Left cardiac atrium (tissue), 4 donors: ENCODE measurements at regions of chr3 and their contacts with region 1.

Region 1: GRCh38 chr3:159260049-159260662 is 458.3 kb downstream of the MFSD1 start:
- DNase-seq: peak; percentile 31
- ATAC-seq: peak; percentile 18 to 65

Region 2: DNA sequence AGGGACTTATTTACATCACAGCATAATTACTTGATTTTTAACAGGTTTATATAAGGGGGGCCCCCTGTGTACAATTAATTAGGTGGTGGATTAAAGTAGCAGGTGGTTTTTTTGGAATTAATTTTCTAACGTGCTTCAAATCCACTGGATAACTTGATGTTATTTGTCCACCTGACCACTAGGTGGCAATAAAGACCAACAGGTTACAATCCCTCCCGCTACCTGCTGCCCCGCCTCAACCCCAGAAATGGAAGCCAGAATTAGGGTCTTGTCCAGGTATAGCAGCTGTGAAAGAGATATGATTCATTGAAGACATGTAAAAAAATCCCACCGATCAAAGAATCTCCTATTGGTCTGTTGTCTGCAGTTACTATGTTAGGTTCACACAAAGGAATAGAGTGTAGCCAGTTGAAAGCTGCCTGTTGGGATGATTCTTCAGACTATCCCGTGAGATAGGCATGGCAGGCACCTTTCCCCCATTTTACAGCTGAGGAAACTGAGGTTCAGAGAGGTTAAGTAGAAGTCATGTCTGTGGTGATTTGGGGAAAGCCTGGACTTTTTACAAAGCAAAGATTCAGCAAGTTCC is 414.3 kb before region 1 on chr3:
- intact Hi-C with region 1: loop called (anchors 2 to 5 kb)
- DNase-seq: no peak
- ATAC-seq: peak in 1 of 2 donors; percentile 14

Region 3: GRCh38 chr3:158918008-158918407 is 342.1 kb before region 1 on chr3:
- intact Hi-C with region 1: loop called (anchors 5 to 10 kb)
- DNase-seq: no peak
- ATAC-seq: peak in 1 of 2 donors; percentile 51

Region 4: DNA sequence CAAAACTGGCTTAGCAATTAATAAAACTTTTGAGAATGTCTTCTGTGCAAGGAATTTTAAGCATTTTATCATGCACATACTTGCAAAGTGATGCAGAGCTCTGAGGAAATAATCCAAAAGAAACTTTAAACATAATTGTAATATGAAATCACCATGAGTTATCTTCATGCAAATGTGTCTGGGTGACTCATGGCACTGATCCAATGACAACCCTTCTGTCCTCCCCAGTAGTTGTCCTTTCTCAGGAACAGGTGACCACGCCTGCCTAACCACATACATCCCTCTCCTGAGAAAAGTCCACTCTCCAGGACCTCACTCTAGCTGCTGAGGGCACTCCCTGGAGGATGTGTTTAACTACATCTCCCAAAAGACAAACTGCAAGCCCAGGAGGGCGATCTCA is 197.9 kb after region 1 on chr3:
- intact Hi-C with region 1: no loop called
- DNase-seq: no peak
- ATAC-seq: peak in 1 of 2 donors; percentile 83

Region 5: DNA sequence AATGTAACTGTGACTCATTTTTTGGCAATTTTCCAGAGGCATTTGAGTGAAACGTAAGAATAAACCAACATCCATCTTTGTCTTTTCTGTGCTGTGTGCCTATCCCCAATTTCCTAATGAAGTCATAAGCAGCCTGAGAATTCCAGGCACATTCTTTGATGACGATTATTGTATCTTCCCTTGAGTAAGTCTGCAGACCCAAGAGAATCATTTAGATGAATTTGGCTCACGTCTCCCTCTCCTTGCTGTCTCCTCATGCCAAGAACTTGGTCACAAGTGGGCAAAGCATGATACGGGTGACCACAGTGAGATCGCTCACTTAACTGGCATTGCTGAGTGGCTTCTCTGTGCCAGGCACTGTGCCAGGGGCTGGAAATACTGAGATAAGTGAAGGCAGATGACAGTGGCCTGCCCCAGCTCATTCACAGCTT is 344.0 kb after region 1 on chr3:
- intact Hi-C with region 1: loop called in 1 of 2 experiments (anchors 5 kb)
- DNase-seq: peak; percentile 81
- ATAC-seq: peak; percentile 95 to 98

Region 6: GRCh38 chr3:159804726-159805410 is 544.7 kb after region 1 on chr3:
- intact Hi-C with region 1: loop called in 1 of 2 experiments (anchors 2 kb)
- DNase-seq: peak; percentile 67
- ATAC-seq: peak; percentile 91 to 96

Region 7: DNA sequence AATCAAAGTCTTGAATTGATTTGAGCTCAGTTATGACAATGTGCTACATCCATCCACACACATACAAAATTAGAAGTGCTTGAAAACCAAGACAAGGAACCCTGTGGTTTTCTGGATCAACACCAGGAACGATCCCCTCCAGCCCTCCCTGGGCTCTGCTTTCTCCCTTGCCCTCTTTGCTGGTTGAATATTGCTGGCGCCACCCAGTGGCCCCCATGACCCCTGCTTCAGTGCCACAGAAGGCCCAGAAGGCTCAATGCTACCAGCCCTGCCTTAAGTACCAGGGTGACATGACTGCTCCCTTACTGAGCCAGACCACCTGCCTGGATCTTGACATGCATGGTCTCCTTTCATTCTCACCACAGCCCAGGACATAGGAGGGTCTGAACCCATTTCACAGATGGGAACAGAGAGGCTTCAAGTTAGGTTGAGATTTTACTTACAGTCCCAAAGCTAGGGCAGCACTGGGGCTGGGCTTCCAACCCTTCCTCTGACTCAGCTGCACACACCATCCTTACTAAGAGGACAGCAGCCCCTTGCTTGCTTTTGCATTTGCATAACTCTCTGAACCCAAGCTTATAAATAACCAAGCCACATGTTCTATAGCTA is 743.5 kb after region 1 on chr3:
- intact Hi-C with region 1: loop called in 1 of 2 experiments (anchors 5 kb)
- DNase-seq: peak; percentile 48
- ATAC-seq: peak; percentile 83 to 87